Activated T-helper 2 cell treated with anti-CD3 and anti-CD28 coated beads, Interferon-gamma antibody, Interleukin-2, Interleukin-4, amounts not matched to agents 10 μg/mL and 5 μg/mL and 100 μg/mL, durations not matched to agents 14 hours and 24 hours and 36 hours (primary cell): ENCODE measurements at regions of chr16 and their contacts with region 1.

Region 1: DNA sequence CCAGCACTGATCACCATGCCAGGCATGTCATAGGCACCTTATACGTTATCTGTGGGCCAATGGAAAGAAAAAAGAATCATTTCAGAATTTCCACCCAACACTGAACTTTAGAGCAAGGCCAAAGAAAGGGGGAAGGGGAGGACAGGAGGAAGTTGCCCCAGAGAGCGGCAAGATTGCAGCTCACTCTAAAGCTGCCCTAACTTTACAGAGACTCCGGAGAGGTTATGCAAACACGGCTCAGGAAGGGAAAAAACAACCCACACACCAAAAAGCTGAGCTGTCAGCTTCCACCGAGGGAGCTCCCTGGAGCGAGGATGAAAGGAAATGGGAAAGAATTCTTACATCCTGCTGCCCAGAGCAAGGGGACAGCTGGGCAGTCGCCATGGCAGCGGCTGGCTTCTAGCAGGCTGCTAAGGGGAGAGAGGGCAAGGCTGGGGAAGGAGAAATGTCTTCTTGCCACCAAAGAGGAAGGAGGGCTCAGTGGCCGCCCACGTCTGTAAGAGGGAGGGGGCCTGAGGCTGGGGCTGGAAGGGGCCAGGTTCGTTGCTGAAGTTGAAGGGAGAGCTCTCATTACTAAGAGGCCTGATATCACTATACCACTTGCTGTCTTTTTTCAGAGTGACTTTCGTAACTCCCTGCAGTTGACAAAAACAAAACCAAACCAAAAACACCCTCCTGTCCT is 18.2 kb downstream of the COTL1 start:
- DNase-seq: peak; percentile 55
- H3K4me3 Mint-ChIP-seq: peak overlapping the region; percentile 78
- H3K27ac Mint-ChIP-seq: peak overlapping the region; percentile 97
- H3K4me1 Mint-ChIP-seq: peaks cover 82% of the 10 kb centered on the region
- H3K27me3 Mint-ChIP-seq: no peaks in the 10 kb centered on the region

Region 2: GRCh38 chr16:83807710-83808572 is 791.7 kb before region 1 on chr16 and contains the start of gene HSBP1:
- intact Hi-C with region 1: loop called (anchors 5 kb)
- DNase-seq: peak; percentile 91
- H3K4me3 Mint-ChIP-seq: peak within 1 kb of the TSS; percentile 99
- H3K27ac Mint-ChIP-seq: peak within 1 kb of the TSS; percentile 94
- H3K4me1 Mint-ChIP-seq: peaks cover 26% of the 10 kb centered on the region
- H3K27me3 Mint-ChIP-seq: peaks cover 6% of the 10 kb centered on the region
- total RNA-seq, gene HSBP1: 109 and 117 TPM in 2 replicates

Region 3: DNA sequence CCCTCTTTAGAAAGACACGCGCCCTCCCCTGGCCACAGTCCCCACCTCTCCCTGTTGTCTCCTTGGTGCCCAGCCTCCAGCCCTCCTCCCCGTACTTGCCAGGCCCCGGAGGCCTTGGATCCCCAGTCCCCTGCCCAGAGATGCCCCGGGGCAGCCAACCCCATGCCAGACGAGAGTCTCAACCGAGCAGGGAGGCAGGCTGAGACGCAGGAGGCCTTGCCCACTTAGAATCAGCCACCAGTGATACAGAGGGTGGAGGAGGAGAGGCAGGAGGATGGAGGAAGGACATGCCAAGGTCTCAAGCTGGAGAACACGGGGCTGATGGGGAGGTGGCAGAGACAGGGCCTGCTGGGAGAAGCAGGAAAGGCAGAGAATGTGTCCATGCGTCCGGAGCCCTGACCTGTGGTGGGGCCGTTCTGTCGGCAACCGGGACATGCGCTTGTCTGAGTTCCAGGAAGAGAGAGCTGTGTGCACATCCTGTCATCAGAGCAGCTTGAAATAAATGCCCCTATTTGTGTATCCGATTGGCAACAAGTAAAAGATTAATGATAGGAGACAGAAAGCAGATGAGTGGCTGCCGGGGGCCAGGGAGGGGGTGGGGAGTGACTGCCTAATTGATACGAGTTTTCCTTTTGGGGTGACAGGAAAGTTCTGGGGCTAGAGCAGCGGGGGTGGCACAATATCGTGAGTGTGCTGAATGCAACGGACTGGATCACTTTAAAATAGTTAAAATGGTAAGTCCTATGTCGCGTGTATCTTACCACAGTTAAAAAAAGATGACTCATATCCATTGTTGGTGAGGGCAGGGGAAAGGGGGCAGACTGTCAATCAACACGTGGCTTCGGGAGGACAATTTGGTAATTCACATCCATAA is 50.5 kb before region 1 on chr16:
- intact Hi-C with region 1: loop called (anchors 1 kb)
- DNase-seq: peak; percentile 56
- H3K4me3 Mint-ChIP-seq: peak overlapping the region; percentile 87
- H3K27ac Mint-ChIP-seq: peak overlapping the region; percentile 98
- H3K4me1 Mint-ChIP-seq: peaks cover 57% of the 10 kb centered on the region
- H3K27me3 Mint-ChIP-seq: no peaks in the 10 kb centered on the region